ENCODE measurements at regions of chr19 and their contacts with region 1.

Region 1: DNA sequence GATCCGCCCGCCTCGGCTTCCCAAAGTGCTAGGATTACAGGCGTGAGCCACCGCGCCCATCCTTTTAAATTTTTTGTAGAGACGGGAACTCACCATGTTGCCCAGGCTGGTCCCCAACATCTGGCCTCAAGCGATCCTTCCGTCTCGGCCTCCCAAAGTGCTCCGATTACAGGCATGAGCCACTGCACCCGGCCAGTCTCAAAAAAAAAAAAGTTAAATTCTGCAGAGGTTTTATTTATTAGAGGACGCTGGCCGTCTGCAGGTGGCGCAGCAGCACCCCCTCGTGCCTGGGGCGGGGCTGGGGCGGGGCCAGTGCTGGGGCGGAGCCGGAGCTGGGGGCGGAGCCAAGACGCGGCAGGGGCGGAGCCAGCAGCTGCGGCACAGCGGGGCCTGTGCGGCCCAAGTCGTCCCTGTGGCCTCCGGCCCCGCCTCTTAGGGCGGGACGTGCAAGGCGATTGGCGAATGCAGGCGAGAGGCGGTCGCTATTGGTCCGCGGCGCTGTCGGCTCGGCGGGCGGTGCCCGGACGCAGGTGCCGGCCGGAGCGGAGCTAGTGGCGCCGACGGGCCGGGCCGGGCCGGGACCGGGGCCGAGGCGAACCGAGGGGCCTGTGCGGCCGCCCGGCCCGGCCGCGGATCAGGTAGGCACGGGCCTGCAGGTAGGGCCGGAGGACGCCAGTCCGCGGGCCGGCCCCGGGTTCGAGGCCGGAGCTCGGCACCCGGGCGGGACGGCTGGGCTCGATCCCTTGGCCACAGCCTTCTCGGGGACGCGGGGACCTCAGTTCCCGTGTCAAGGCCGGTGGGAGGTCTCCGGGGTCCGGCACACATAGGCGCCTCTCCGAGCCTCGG is at the start of gene MARCHF2:
- DNase-seq: peak; percentile 98
- ATAC-seq: peak; percentile 99
- H3K4me3 ChIP-seq: peak within 1 kb of the TSS; percentile 52 to 82 (median 65)
- H3K4me3 Mint-ChIP-seq: peak within 1 kb of the TSS; percentile 70
- H3K27ac ChIP-seq: peak within 1 kb of the TSS in 1 of 2 donors; percentile 59
- H3K27ac Mint-ChIP-seq: peak within 1 kb of the TSS; percentile 16
- H3K4me1 ChIP-seq: peaks cover 5 to 9% of the 10 kb centered on the region in 2 donors
- H3K4me1 Mint-ChIP-seq: peaks cover 11% of the 10 kb centered on the region
- H3K27me3 ChIP-seq: no peaks in the 10 kb centered on the region
- H3K27me3 Mint-ChIP-seq: no peaks in the 10 kb centered on the region
- CTCF ChIP-seq: peak; percentile 76
- total RNA-seq, gene MARCHF2: 22.9 and 24.8 TPM in 2 replicates

Region 2: DNA sequence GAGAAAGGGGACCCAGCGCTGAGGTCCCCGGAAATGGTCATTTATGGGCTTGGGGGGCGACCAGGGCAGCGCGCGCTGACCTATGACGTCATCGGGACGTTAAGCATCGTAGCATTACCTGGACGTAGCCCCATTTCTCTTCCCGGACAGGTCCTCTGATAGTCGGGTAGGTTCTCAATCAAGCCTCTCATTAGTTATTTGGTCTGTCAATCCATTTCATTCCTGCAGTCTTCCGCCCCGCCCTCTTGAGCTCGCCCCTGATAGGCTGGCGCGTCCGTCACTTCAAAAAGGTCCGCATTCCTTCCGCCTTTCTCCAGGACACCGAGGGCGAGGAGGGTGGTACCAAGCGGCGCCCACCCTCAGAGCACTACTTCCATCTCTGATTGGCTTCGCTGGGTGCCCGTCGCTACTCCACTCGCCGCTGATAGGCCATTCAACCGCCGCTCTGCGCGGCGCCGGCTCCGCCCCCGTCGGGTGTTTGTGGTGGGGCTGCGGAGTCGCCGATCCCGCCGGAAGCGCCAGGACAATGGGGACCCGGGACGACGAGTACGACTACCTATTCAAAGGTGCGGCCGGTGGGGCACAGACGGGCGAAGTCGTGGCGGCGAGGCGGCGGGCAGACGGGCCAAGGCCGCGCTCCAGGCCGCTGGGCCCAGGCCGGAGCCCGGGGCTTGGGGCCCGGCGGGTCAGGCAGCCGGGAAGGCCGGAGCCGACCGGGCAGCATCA is 23.0 kb before region 1 on chr19 and contains the start of gene RAB11B:
- CTCF ChIA-PET with region 1: interaction called, 13 read pairs
- POLR2A ChIA-PET with region 1: interaction called, 14 read pairs
- intact Hi-C with region 1: loop called (anchors 1 kb)
- DNase-seq: peak; percentile 100
- ATAC-seq: peak; percentile 86
- H3K4me3 ChIP-seq: peak within 1 kb of the TSS; percentile 54 to 89 (median 82)
- H3K4me3 Mint-ChIP-seq: peak within 1 kb of the TSS; percentile 95
- H3K27ac ChIP-seq: peak within 1 kb of the TSS; percentile 70 to 96
- H3K27ac Mint-ChIP-seq: peak within 1 kb of the TSS; percentile 98
- H3K4me1 ChIP-seq: peaks cover 10 to 20% of the 10 kb centered on the region in 2 donors
- H3K4me1 Mint-ChIP-seq: peaks cover 29% of the 10 kb centered on the region
- H3K27me3 ChIP-seq: no peaks in the 10 kb centered on the region
- H3K27me3 Mint-ChIP-seq: no peaks in the 10 kb centered on the region
- CTCF ChIP-seq: no peak
- total RNA-seq, gene RAB11B: 126 and 130 TPM in 2 replicates

Region 3: DNA sequence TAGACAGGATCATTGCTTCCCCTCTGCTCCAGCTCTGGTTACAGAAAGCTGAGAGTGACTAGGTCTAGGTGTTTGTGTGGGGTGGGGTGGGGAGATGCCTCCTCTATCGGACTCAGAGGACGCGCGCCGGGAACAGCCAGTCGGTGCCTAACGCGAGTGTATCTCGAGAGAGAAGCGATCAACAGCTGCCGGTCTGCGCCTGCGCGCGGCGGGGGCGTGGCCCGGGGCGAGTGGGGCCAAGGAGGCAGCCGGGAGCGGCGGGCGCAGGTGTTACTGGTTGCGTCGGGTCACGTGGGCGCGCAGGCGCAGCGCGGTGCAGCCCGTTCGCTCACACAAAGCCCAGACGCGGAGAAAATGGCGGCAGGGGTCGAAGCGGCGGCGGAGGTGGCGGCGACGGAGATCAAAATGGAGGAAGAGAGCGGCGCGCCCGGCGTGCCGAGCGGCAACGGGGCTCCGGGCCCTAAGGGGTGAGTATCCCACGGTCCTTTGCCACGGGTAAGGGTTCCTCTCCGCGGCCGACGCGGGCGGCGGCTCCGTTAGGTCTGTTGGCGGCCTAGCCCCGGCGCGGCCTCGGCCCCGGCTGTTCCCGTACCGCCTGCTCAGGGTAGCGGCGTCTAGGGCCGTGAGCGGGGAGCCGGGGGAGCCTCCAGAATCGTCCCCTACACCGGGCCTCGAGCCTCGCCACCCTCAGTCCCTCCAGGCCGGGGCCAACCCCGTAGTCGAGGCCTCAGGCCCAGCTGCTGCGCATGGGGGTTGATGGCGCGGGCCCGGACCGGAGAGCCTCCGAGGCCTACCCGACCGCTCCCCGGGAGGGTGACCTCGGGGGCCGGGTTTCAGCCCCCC is 31.9 kb after region 1 on chr19 and contains the start of gene HNRNPM:
- CTCF ChIA-PET with region 1: interaction called, 14 read pairs
- POLR2A ChIA-PET with region 1: interaction called, 19 read pairs
- intact Hi-C with region 1: loop called (anchors 1 kb)
- DNase-seq: peak; percentile 99
- ATAC-seq: peak; percentile 92
- H3K4me3 ChIP-seq: peak within 1 kb of the TSS; percentile 65 to 97 (median 97)
- H3K4me3 Mint-ChIP-seq: peak within 1 kb of the TSS; percentile 94
- H3K27ac ChIP-seq: peak within 1 kb of the TSS; percentile 89 to 97
- H3K27ac Mint-ChIP-seq: peak within 1 kb of the TSS; percentile 98
- H3K4me1 ChIP-seq: peaks cover 38 to 47% of the 10 kb centered on the region in 2 donors
- H3K4me1 Mint-ChIP-seq: peaks cover 37% of the 10 kb centered on the region
- H3K27me3 ChIP-seq: no peaks in the 10 kb centered on the region
- H3K27me3 Mint-ChIP-seq: no peaks in the 10 kb centered on the region
- CTCF ChIP-seq: no peak
- total RNA-seq, gene HNRNPM: 207 and 221 TPM in 2 replicates

Region 4: GRCh38 chr19:8473648-8474476 is 60.9 kb after region 1 on chr19:
- CTCF ChIA-PET with region 1: interaction called, 4 read pairs
- POLR2A ChIA-PET with region 1: no interaction called
- intact Hi-C with region 1: loop called (anchors 1 kb)
- DNase-seq: peak; percentile 79
- ATAC-seq: peak; percentile 84
- H3K4me3 ChIP-seq: peak overlapping the region in 2 of 5 experiments; percentile 0 to 7
- H3K4me3 Mint-ChIP-seq: peak overlapping the region; percentile 71
- H3K27ac ChIP-seq: peak overlapping the region; percentile 56 to 77
- H3K27ac Mint-ChIP-seq: peak overlapping the region; percentile 88
- H3K4me1 ChIP-seq: peaks cover 34 to 45% of the 10 kb centered on the region in 2 donors
- H3K4me1 Mint-ChIP-seq: peaks cover 50% of the 10 kb centered on the region
- H3K27me3 ChIP-seq: no peaks in the 10 kb centered on the region
- H3K27me3 Mint-ChIP-seq: no peaks in the 10 kb centered on the region
- CTCF ChIP-seq: no peak

Region 5: GRCh38 chr19:8505680-8506401 is 92.8 kb after region 1 on chr19:
- CTCF ChIA-PET with region 1: interaction called, 28 read pairs
- POLR2A ChIA-PET with region 1: interaction called, 5 read pairs
- intact Hi-C with region 1: no loop called
- DNase-seq: peak; percentile 82
- ATAC-seq: peak; percentile 78
- H3K4me3 ChIP-seq: peak overlapping the region in 4 of 5 experiments; percentile 64 to 72 (median 68)
- H3K4me3 Mint-ChIP-seq: peak overlapping the region; percentile 93
- H3K27ac ChIP-seq: no peak overlapping the region
- H3K27ac Mint-ChIP-seq: peak overlapping the region; percentile 68
- H3K4me1 ChIP-seq: peaks cover 0 to 24% of the 10 kb centered on the region in 2 donors
- H3K4me1 Mint-ChIP-seq: peaks cover 9% of the 10 kb centered on the region
- H3K27me3 ChIP-seq: peaks cover 0 to 10% (median 2%) of the 10 kb centered on the region in 4 experiments
- H3K27me3 Mint-ChIP-seq: no peaks in the 10 kb centered on the region
- CTCF ChIP-seq: peak; percentile 73

Region 6: DNA sequence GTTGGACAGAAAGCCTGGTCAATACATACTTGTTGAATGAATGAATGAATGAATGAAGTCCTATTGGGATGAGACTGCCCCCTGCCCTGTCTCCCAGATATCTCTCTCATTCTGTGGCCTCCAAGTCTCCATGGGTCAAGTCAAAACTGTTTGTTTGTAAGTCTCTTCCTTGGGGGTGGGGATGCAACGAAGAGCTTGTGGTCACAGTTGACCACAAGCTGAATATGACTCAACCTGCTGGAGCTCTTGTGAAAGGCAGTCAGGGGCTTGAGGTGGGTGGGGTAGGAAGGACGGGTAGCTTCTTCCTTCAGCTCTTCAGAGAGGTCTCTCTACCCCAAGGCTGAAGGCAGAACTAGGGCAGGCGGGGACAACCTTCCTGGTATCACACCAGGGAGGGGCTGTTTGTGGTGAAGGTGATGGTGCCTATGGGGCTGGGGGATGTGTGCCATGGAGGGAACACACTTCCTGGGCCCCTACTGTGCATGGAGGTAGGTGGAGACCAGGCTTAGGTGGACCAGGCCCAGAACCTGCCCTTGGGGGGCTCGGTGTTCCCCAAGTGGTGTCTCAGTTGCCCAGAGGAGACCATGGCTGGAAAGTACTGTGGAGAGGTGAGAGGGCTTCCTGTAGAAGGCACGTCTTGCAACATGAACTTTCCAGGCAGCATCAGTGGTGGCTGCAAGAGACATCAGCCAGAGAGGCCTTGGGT is 156.2 kb after region 1 on chr19:
- CTCF ChIA-PET with region 1: no interaction called
- POLR2A ChIA-PET with region 1: no interaction called
- intact Hi-C with region 1: loop called (anchors 1 kb)
- DNase-seq: peak; percentile 44
- ATAC-seq: peak; percentile 90
- H3K4me3 ChIP-seq: peak overlapping the region in 1 of 5 experiments; percentile 30
- H3K4me3 Mint-ChIP-seq: peak overlapping the region; percentile 73
- H3K27ac ChIP-seq: peak overlapping the region; percentile 38 to 56
- H3K27ac Mint-ChIP-seq: peak overlapping the region; percentile 86
- H3K4me1 ChIP-seq: peaks cover 20 to 30% of the 10 kb centered on the region in 2 donors
- H3K4me1 Mint-ChIP-seq: peaks cover 52% of the 10 kb centered on the region
- H3K27me3 ChIP-seq: no peaks in the 10 kb centered on the region
- H3K27me3 Mint-ChIP-seq: no peaks in the 10 kb centered on the region
- CTCF ChIP-seq: no peak